Panc1 (cell line): ENCODE measurements at regions of chr19 and their contacts with region 1.

Region 1: GRCh38 chr19:1260636-1261537 is 8.2 kb upstream of the CIRBP start:
- DNase-seq: no peak
- ATAC-seq: peak; percentile 66
- H3K4me3 ChIP-seq: peak overlapping the region; percentile 60 to 70
- H3K27ac ChIP-seq: peak overlapping the region; percentile 95
- H3K4me1 ChIP-seq: peaks cover 67% of the 10 kb centered on the region
- H3K27me3 ChIP-seq: no peaks in the 10 kb centered on the region
- CTCF ChIP-seq: no peak

Region 2: DNA sequence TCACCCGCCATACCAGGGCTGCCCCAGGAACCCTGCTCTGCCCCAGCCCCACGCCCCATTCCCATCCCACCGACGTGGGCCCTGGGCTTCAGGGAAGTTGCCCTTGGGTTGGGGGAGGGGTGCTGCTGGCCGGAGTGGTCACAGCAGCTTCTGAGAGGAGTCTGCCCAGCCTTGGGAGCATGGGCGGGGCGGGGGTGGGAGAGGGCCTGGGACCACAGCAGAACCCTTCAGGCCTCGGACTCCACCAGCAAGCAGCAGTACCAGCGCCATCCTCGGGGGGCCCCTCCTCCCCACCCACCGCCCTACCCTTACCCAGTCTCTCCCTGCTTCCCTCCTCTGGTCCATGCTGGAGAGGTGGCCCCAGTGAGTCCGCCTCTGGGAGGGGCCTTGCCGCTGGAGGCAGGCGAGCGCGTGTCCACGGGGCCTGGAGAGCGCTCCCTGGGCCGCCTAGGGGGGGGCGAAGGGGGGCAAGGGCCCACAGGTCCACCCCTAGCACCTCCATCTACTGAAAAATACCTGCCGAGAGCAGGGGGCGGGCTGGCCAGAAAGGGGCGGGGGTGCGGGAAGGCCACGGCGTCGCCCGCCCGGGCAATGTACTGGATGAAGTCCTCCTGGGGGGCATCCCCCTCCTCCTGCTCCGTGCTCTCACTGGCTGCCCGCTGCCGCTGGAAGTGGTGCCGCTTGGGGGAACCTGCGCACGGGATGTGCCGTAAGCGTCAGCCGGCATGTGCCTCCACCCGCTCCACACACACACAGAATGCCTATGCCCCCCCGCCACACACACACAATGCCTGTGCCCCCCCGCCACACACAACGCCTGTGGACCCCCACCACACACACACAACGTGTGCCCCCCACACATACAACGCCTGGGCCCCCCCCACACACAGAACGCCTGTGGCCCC is 30.1 kb before region 1 on chr19:
- CTCF ChIA-PET with region 1: no interaction called
- POLR2A ChIA-PET with region 1: interaction called, 13 read pairs
- in situ Hi-C with region 1: no loop called
- intact Hi-C with region 1: no loop called
- DNase-seq: no peak
- ATAC-seq: no peak; the same call in 1 of the 2 replicates
- H3K4me3 ChIP-seq: no peak overlapping the region
- H3K27ac ChIP-seq: no peak overlapping the region
- H3K4me1 ChIP-seq: peaks cover 14% of the 10 kb centered on the region
- H3K27me3 ChIP-seq: no peaks in the 10 kb centered on the region
- CTCF ChIP-seq: no peak